Activated CD8-positive, alpha-beta T cell treated with anti-CD3 and anti-CD28 coated beads for 36 hours (primary cell): ENCODE measurements at regions of chr22 and their contacts with region 1.

Region 1: GRCh38 chr22:22748297-22748743 is 103.9 kb downstream of the GGTLC2 start:
- DNase-seq: peak; percentile 70
- ATAC-seq: peak; percentile 87
- H3K4me3 Mint-ChIP-seq: no peak overlapping the region
- H3K27ac Mint-ChIP-seq: no peak overlapping the region
- H3K4me1 Mint-ChIP-seq: peaks cover 19% of the 10 kb centered on the region
- H3K27me3 Mint-ChIP-seq: no peaks in the 10 kb centered on the region
- CTCF ChIP-seq: peak; percentile 84

Region 2: GRCh38 chr22:22558972-22559603 is 189.2 kb before region 1 on chr22 and contains the start of gene PRAME:
- CTCF ChIA-PET with region 1: no interaction called
- POLR2A ChIA-PET with region 1: no interaction called
- intact Hi-C with region 1: no loop called
- DNase-seq: peak; percentile 93
- ATAC-seq: peak; percentile 99
- H3K4me3 Mint-ChIP-seq: no peak within 1 kb of the TSS
- H3K27ac Mint-ChIP-seq: no peak within 1 kb of the TSS
- H3K4me1 Mint-ChIP-seq: peaks cover 4% of the 10 kb centered on the region
- H3K27me3 Mint-ChIP-seq: peaks cover 1% of the 10 kb centered on the region
- CTCF ChIP-seq: peak; percentile 95
- total RNA-seq, gene PRAME: not detected

Region 3: GRCh38 chr22:22710719-22711531 is 37.4 kb before region 1 on chr22:
- CTCF ChIA-PET with region 1: interaction called, 29 read pairs
- POLR2A ChIA-PET with region 1: interaction called, 3 read pairs
- intact Hi-C with region 1: loop called (anchors 2 kb)
- DNase-seq: peak; percentile 85
- ATAC-seq: peak; percentile 85
- H3K4me3 Mint-ChIP-seq: no peak overlapping the region
- H3K27ac Mint-ChIP-seq: no peak overlapping the region
- H3K4me1 Mint-ChIP-seq: no peaks in the 10 kb centered on the region
- H3K27me3 Mint-ChIP-seq: no peaks in the 10 kb centered on the region
- CTCF ChIP-seq: peak; percentile 97

Region 4: DNA sequence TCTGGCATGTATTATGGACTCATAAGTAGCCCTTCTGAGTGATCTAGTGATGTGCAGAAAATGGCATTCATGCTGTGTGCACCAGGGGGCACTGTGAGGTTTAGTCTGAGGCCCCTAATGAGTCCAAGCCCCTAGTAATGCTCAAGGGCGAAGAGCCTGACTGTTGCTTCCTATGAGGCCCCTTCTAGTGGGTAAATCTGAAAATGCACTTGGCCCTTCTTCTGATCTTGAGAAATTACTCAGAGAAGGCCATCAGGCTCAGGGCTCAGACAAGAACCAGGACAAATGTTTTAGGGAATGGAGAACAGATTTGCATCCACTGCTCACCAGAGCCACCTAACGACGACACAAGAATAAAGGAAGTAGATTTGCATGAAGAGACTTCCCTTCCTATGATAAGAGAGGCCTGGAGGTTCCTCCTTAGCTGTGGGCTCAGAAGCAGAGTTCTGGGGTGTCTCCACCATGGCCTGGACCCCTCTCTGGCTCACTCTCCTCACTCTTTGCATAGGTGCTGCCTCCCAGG is 28.1 kb before region 1 on chr22:
- CTCF ChIA-PET with region 1: interaction called, 63 read pairs
- POLR2A ChIA-PET with region 1: no interaction called
- intact Hi-C with region 1: no loop called
- DNase-seq: peak; percentile 83
- ATAC-seq: peak; percentile 85
- H3K4me3 Mint-ChIP-seq: no peak overlapping the region
- H3K27ac Mint-ChIP-seq: peak overlapping the region; percentile 43
- H3K4me1 Mint-ChIP-seq: peaks cover 40% of the 10 kb centered on the region
- H3K27me3 Mint-ChIP-seq: no peaks in the 10 kb centered on the region
- CTCF ChIP-seq: peak; percentile 81

Region 5: DNA sequence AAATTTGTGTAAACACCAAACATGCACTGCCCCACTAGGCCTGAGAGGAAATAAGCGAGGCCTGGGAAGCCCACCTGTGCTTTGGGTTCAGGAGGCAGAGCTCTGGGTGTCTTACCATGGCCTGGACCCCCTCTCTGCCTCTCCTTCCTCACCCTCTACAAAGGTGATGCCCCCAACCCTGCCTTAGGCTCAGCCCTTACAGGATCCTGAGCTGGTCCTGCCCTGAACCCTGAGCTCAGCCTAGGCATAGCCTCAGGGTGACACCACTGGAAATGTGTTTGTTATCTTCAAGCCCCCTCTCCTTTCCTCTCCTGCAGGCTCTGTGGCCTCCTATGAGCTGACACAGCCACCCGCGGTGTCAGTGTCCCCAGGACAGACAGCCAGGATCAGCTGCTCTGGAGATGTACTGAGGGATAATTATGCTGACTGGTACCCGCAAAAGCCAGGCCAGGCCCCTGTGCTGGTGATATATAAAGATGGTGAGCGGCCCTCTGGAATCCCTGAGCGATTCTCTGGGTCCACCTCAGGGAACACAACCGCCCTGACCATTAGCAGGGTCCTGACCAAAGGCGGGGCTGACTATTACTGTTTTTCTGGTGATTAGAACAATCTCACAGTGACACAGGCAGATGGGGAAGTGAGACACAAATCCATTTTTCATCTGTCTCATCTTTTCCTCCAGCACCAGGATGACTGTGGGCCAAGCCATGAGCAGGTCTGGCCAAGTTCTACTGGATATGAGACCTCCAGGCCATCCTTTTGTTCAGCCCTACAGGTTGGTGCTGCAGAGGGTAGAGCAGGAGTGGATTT is 13.8 kb after region 1 on chr22:
- CTCF ChIA-PET with region 1: interaction called, 110 read pairs
- POLR2A ChIA-PET with region 1: interaction called, 3 read pairs
- intact Hi-C with region 1: no loop called
- DNase-seq: no peak
- ATAC-seq: no peak
- H3K4me3 Mint-ChIP-seq: no peak overlapping the region
- H3K27ac Mint-ChIP-seq: peak overlapping the region; percentile 56
- H3K4me1 Mint-ChIP-seq: peaks cover 39% of the 10 kb centered on the region
- H3K27me3 Mint-ChIP-seq: no peaks in the 10 kb centered on the region
- CTCF ChIP-seq: no peak

Region 6: DNA sequence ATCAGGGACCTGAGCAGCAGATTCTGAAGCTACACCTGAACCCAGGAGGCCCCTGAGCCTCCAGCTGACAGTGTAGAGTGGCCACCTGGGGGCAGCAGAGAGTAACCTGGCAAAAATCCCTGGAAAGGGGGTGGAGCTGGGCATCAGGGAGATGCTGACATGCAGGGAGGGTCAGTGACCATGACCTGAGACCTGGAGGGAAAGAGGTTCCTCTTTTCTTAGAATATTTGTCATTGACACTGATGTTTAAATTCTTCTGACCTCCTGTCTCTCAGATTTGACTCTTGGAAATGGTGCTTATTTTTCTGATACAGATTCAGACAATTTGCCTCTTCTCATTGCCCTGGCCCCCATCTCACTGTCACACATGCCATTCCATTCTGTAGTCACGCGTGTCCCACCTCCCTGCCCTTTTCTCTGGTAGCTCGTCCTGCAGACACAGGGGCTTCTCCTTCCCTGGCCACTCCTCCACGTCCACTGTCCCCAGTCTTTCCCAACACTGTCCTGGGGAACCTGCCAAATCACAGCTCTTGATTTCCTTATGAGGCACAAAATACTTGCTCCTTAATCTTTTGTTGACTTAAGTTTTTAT is 22.1 kb after region 1 on chr22:
- CTCF ChIA-PET with region 1: interaction called, 110 read pairs
- POLR2A ChIA-PET with region 1: interaction called, 3 read pairs
- intact Hi-C with region 1: no loop called
- DNase-seq: peak; percentile 65
- ATAC-seq: peak; percentile 62
- H3K4me3 Mint-ChIP-seq: no peak overlapping the region
- H3K27ac Mint-ChIP-seq: no peak overlapping the region
- H3K4me1 Mint-ChIP-seq: peaks cover 4% of the 10 kb centered on the region
- H3K27me3 Mint-ChIP-seq: no peaks in the 10 kb centered on the region
- CTCF ChIP-seq: peak; percentile 80

Region 7: DNA sequence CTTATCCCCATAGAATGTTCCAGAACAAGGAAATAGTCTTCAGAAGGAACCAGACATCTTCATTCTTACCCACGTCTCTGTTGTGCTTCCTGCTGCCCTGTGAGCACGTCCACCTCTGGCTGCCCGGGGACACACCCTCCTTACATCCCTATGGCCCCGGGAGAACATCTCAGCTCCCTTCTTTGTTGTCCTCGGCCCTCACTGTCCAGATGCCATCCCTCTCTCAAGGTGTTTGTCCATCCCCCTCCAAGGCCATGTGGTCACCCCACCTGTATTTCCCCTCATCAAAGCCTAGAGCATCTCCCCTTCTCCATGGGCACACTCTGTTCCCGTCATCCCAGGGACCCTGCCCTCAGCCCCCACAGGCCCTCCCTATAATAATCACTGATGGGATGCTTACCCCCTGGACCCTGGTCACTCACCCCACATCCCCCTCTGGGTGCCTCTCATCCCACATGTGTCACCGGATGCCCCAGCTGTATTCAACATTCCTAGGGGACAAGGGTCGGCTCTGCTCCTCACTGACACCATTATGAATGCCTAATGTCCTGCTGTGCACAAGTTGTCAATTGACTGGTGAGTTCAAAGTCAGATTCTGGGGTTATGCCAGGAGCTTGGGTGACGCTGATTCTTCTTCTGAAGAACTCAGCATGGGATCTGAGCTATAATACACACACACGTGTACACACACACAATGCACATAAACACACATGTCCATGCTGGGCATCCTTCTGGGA is 168.1 kb after region 1 on chr22:
- CTCF ChIA-PET with region 1: no interaction called
- POLR2A ChIA-PET with region 1: no interaction called
- intact Hi-C with region 1: no loop called
- DNase-seq: no peak
- ATAC-seq: no peak
- H3K4me3 Mint-ChIP-seq: no peak overlapping the region
- H3K27ac Mint-ChIP-seq: no peak overlapping the region
- H3K4me1 Mint-ChIP-seq: no peaks in the 10 kb centered on the region
- H3K27me3 Mint-ChIP-seq: no peaks in the 10 kb centered on the region
- CTCF ChIP-seq: no peak